Activated CD4-positive, alpha-beta T cell treated with anti-CD3 and anti-CD28 coated beads for 36 hours (primary cell): ENCODE measurements at regions of chr9 and their contacts with region 1.

Region 1: GRCh38 chr9:76302947-76303940 is 91.0 kb downstream of the RFK start:
- DNase-seq: peak; percentile 21
- ATAC-seq: no peak
- H3K4me3 Mint-ChIP-seq: no peak overlapping the region
- H3K27ac Mint-ChIP-seq: no peak overlapping the region
- H3K4me1 Mint-ChIP-seq: no peaks in the 10 kb centered on the region
- H3K27me3 Mint-ChIP-seq: peaks cover 7% of the 10 kb centered on the region

Region 2: DNA sequence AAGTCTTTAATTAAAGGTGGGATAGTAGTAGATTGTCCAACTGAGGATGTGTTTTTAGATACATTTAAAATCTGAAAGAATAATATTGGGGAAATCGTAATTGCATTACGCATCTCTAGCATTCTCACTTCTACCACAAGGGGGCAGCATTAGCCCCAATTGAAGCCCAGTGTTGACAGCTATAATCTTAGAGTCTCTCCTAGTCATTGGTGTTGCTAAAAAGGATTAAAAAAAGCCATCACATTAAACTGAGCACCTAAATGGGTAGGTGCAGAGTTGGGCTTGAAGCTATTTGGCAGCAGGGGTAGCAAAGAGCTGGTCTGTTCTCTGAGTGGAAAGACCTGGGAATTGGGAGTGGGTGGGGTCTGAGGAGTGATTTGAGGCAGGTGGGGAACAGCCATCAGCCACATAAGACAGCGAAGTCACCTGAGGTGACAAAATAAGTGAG is 1037.7 kb before region 1 on chr9:
- CTCF ChIA-PET with region 1: interaction called, 9 read pairs
- POLR2A ChIA-PET with region 1: no interaction called
- intact Hi-C with region 1: loop called (anchors 1 to 2 kb)
- DNase-seq: peak; percentile 69
- ATAC-seq: peak; percentile 60
- H3K4me3 Mint-ChIP-seq: no peak overlapping the region
- H3K27ac Mint-ChIP-seq: no peak overlapping the region
- H3K4me1 Mint-ChIP-seq: no peaks in the 10 kb centered on the region
- H3K27me3 Mint-ChIP-seq: no peaks in the 10 kb centered on the region

Region 3: GRCh38 chr9:75866273-75866871 is 436.9 kb before region 1 on chr9:
- CTCF ChIA-PET with region 1: interaction called, 4 read pairs
- POLR2A ChIA-PET with region 1: no interaction called
- intact Hi-C with region 1: loop called (anchors 2 kb)
- DNase-seq: peak; percentile 56
- ATAC-seq: no peak
- H3K4me3 Mint-ChIP-seq: no peak overlapping the region
- H3K27ac Mint-ChIP-seq: no peak overlapping the region
- H3K4me1 Mint-ChIP-seq: peaks cover 10% of the 10 kb centered on the region
- H3K27me3 Mint-ChIP-seq: no peaks in the 10 kb centered on the region

Region 4: DNA sequence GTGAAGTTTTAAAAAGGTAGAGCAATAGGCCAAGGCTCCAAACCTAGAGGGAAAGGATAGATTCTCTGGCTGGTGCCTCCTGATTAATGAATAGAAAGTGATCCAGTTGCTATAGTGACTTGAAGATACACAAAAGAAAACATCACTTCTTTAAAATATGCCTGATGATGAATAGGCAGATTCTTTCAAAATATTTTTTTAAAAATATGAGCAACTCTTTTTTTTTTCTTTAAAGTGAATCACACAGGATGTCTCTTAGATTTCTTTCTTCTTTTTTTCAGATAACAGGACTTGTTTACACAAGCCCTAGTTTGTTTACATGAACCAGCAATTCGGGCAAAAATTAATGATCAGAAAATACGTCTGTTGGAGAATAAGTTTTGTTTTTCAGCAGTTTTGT is 33.4 kb before region 1 on chr9:
- CTCF ChIA-PET with region 1: interaction called, 10 read pairs
- POLR2A ChIA-PET with region 1: no interaction called
- intact Hi-C with region 1: no loop called
- DNase-seq: no peak
- ATAC-seq: no peak
- H3K4me3 Mint-ChIP-seq: no peak overlapping the region
- H3K27ac Mint-ChIP-seq: no peak overlapping the region
- H3K4me1 Mint-ChIP-seq: no peaks in the 10 kb centered on the region
- H3K27me3 Mint-ChIP-seq: no peaks in the 10 kb centered on the region